IMR-90 (cell line): ENCODE measurements at regions of chr7 and their contacts with region 1.

Region 1: GRCh38 chr7:43148161-43148731 is 35.8 kb downstream of the HECW1 start:
- DNase-seq: peak; percentile 23
- ATAC-seq: no peak
- H3K4me3 ChIP-seq: no peak overlapping the region
- H3K27ac ChIP-seq: no peak overlapping the region
- H3K4me1 ChIP-seq: no peaks in the 10 kb centered on the region
- H3K27me3 ChIP-seq: no peaks in the 10 kb centered on the region; the same call in 1 of the 2 replicates
- CTCF ChIP-seq: no peak
- POLR2A ChIP-seq: no peak
- RAD21 ChIP-seq: no peak

Region 2: DNA sequence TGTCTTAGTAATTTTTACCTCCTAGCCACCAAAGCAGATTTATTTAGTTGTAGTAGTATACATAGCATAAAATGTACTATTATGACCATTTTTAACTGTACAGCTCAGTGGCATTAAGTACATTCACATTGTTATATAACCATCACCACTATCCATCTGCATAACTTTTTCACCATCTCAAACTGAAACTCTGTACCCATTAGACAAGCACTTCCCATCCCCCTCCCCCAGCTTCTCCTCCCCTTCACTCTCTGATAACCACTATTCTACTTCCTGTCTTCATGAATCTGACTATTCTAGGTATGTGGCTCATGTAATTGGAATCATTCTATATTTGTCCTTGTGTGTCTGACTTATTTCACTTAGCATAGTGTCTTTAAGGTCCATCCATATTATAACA is 144.2 kb before region 1 on chr7:
- CTCF ChIA-PET with region 1: no interaction called
- POLR2A ChIA-PET with region 1: no interaction called
- dilution Hi-C with region 1: no loop called
- in situ Hi-C with region 1: no loop called
- intact Hi-C with region 1: loop called (anchors 5 kb)
- DNase-seq: no peak
- ATAC-seq: no peak
- H3K4me3 ChIP-seq: no peak overlapping the region
- H3K27ac ChIP-seq: no peak overlapping the region
- H3K4me1 ChIP-seq: no peaks in the 10 kb centered on the region
- H3K27me3 ChIP-seq: peaks cover 2% of the 10 kb centered on the region; the same call in 1 of the 2 replicates
- CTCF ChIP-seq: no peak
- POLR2A ChIP-seq: no peak
- RAD21 ChIP-seq: no peak